Common myeloid progenitor, CD34-positive (primary cell): ENCODE measurements at regions of chr6 and their contacts with region 1.

Region 1: GRCh38 chr6:112296122-112296521 is 41.8 kb upstream of the LAMA4 start:
- DNase-seq: peak in 2 of 3 donors; percentile 43 to 48
- H3K4me3 ChIP-seq: no peak overlapping the region
- H3K27ac ChIP-seq: no peak overlapping the region
- H3K4me1 ChIP-seq: no peaks in the 10 kb centered on the region
- H3K27me3 ChIP-seq: peaks cover 3 to 50% (median 8%) of the 10 kb centered on the region in 5 experiments

Region 2: DNA sequence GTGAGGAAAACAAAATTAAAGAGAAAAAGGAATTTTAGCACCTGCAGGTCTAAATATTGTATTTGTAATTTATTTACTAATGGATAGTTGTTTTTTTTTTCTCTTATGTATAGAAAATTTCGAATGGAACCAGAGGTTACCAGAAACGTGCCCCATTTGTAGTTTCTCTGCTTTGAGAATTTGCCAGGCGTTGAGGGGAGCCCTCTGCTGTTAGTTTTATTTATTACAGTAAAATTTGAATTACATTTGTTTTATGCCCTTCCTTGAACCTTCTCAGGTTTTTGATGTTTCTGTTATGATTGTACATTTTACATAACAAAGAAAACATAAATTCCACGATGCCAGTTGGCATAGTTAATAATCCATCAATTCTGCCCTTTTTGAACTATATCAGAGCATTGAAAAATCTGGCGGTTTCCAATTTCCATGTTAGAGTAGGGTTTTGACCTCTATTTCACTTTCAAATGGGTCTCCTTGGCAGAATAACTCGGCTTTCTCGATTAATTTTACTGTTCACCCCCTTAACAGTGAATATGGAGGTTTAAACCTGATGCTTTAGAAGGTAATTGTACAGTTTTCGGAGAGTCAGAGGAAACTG is 15.9 kb after region 1 on chr6:
- CTCF ChIA-PET with region 1: interaction called, 43 read pairs
- POLR2A ChIA-PET with region 1: no interaction called
- DNase-seq: peak; percentile 34 to 53 (median 36)
- H3K4me3 ChIP-seq: no peak overlapping the region
- H3K27ac ChIP-seq: no peak overlapping the region
- H3K4me1 ChIP-seq: no peaks in the 10 kb centered on the region
- H3K27me3 ChIP-seq: peaks cover 0 to 6% (median 0%) of the 10 kb centered on the region in 5 experiments

Region 3: GRCh38 chr6:112337209-112337638 is 41.1 kb after region 1 on chr6:
- CTCF ChIA-PET with region 1: no interaction called
- POLR2A ChIA-PET with region 1: no interaction called
- DNase-seq: no peak
- H3K4me3 ChIP-seq: no peak overlapping the region
- H3K27ac ChIP-seq: no peak overlapping the region
- H3K4me1 ChIP-seq: no peaks in the 10 kb centered on the region
- H3K27me3 ChIP-seq: no peaks in the 10 kb centered on the region

Region 4: DNA sequence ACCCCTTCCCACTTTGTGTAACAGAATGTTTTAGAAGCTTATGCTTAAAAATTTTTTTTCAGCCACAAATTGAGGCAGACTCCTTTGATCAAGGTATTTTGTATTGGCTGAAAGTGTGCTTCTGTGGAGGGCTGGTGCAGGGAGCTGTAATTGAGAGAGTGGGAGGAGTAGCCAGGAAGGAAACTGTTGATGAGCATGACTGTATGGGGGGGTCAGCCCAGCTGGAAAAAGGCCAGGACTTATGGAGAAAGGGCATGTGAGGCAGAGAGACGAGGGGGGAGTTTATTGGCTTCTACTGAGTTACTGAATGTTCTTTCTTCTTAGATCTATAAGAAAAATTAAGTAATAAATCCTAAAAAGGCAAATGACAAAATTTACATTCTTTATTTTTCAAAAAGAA is 64.4 kb after region 1 on chr6:
- CTCF ChIA-PET with region 1: no interaction called
- POLR2A ChIA-PET with region 1: no interaction called
- DNase-seq: peak; percentile 2 to 28 (median 28)
- H3K4me3 ChIP-seq: no peak overlapping the region
- H3K27ac ChIP-seq: no peak overlapping the region
- H3K4me1 ChIP-seq: peaks cover 0 to 7% (median 5%) of the 10 kb centered on the region in 4 experiments
- H3K27me3 ChIP-seq: peaks cover 0 to under 1% (median 0%) of the 10 kb centered on the region in 5 experiments